Psoas muscle (tissue), 8 donors: ENCODE measurements at regions of chr1 and their contacts with region 1.

Region 1: DNA sequence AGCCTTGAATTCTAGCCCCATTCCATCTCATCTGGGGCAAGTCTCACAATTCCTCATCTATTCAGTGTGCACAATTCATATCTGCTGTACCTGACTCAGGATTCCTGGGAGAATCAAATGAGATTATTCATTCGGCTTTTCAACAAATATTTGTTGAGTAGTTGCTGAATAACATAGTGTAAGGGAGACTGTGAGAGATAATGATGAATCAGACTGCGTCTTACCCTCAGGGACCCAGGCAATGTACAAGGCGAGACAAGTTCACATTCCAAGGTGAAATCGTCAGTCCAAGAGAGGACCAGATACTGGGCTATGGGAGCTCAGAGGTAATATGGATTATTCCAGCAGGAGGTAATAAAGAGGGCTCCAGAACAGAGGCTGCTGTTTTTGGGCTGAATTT is 67.8 kb upstream of the SMYD2 start:
- DNase-seq: no peak
- ATAC-seq: no peak
- H3K4me3 ChIP-seq: no peak overlapping the region
- H3K27ac ChIP-seq: no peak overlapping the region
- H3K4me1 ChIP-seq: peaks cover 7% of the 10 kb centered on the region
- H3K27me3 ChIP-seq: peaks cover 0 to 2% (median 0%) of the 10 kb centered on the region in 3 donors
- CTCF ChIP-seq: no peak

Region 2: GRCh38 chr1:214187121-214187900 is 25.8 kb before region 1 on chr1:
- intact Hi-C with region 1: no loop called
- DNase-seq: peak in 1 of 2 donors; percentile 48
- ATAC-seq: peak in 2 of 4 donors; percentile 37 to 63
- H3K4me3 ChIP-seq: peak overlapping the region; percentile 57
- H3K27ac ChIP-seq: no peak overlapping the region
- H3K4me1 ChIP-seq: peaks cover 8% of the 10 kb centered on the region
- H3K27me3 ChIP-seq: peaks cover 0 to 77% (median 13%) of the 10 kb centered on the region in 3 donors
- CTCF ChIP-seq: no peak

Region 3: DNA sequence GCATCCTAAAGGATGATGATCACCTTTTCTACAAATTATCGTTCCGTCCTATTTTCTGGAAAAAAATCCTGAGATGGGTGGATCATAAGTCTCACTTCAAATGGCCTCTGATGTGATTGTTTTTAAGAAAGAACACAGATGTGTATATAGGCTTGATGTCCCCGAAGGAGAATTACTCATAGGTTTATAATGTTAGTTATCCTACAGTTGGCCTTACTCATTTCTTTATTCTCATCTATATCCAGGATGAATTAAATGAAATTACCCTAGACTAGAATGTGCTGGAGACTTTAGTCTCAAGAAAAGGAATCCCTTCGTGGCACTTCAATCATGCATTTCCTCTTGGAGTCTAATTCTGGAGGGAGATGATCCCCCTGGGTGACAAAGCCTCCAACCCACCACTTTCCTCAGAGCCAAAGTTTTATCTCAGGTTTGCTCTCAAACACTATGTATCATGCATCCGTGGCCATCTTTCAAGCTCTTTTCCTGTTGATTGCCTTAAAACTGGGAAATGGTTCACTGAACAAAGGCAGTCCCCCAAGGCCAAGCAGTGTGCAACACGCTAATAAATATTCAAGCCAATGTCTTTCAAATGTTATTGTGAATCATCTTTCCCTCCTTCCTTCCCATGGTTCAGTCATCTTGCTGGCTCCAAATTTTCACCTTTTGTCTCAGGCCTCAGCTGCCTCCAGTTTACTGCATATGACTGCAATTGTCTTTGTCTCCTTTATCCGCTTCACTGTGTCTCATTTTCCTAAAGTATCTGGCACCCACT is 35.4 kb after region 1 on chr1:
- intact Hi-C with region 1: no loop called
- DNase-seq: no peak
- ATAC-seq: no peak
- H3K4me3 ChIP-seq: no peak overlapping the region
- H3K27ac ChIP-seq: no peak overlapping the region
- H3K4me1 ChIP-seq: no peaks in the 10 kb centered on the region
- H3K27me3 ChIP-seq: no peaks in the 10 kb centered on the region
- CTCF ChIP-seq: no peak

Region 4: GRCh38 chr1:214261206-214262123 is 48.3 kb after region 1 on chr1:
- intact Hi-C with region 1: loop called in 1 of 2 experiments (anchors 10 kb)
- DNase-seq: peak; percentile 84 to 94
- ATAC-seq: peak; percentile 96 to 98 (median 97)
- H3K4me3 ChIP-seq: peak overlapping the region; percentile 49
- H3K27ac ChIP-seq: peak overlapping the region; percentile 89
- H3K4me1 ChIP-seq: peaks cover 15% of the 10 kb centered on the region
- H3K27me3 ChIP-seq: no peaks in the 10 kb centered on the region
- CTCF ChIP-seq: peak; percentile 97

Region 5: DNA sequence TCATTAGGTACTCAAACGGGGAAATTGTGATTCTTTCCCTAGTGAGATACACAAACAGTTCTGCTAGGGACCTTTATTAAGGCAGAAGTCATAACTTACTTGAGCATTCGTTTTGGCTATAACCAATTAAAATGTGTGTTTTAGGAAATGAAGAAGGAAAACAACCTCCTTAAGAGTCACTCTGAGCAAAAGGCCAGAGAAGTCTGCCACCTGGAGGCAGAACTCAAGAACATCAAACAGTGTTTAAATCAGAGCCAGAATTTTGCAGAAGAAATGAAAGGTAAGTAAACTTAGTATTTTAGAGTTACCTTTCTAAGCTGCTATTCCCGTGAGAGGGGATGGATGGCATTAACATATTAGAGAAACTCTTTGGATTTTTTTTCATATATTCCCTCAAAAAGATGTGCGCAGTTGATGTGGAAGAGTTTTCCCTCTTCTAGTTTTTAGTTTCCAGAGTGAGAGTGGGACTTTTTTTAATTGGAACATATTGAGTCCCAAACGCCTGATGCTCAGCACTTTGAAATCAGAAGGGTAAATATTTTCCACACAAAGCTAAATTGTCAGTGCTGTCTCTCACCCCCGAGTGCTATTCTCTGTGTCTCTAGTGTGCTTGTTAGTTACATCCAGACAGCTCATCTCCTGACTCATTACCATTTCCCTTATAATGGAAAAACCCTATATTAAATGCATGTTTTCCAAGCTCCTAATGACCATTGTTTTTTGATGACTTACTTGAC is 424.8 kb after region 1 on chr1:
- intact Hi-C with region 1: loop called in 1 of 2 experiments (anchors 5 kb)
- DNase-seq: no peak
- ATAC-seq: peak in 1 of 4 donors; percentile 56
- H3K4me3 ChIP-seq: no peak overlapping the region
- H3K27ac ChIP-seq: no peak overlapping the region
- H3K4me1 ChIP-seq: peaks cover 2% of the 10 kb centered on the region
- H3K27me3 ChIP-seq: no peaks in the 10 kb centered on the region
- CTCF ChIP-seq: peak; percentile 66